CD8-positive, alpha-beta memory T cell (primary cell): ENCODE measurements at regions of chr15 and their contacts with region 1.

Region 1: DNA sequence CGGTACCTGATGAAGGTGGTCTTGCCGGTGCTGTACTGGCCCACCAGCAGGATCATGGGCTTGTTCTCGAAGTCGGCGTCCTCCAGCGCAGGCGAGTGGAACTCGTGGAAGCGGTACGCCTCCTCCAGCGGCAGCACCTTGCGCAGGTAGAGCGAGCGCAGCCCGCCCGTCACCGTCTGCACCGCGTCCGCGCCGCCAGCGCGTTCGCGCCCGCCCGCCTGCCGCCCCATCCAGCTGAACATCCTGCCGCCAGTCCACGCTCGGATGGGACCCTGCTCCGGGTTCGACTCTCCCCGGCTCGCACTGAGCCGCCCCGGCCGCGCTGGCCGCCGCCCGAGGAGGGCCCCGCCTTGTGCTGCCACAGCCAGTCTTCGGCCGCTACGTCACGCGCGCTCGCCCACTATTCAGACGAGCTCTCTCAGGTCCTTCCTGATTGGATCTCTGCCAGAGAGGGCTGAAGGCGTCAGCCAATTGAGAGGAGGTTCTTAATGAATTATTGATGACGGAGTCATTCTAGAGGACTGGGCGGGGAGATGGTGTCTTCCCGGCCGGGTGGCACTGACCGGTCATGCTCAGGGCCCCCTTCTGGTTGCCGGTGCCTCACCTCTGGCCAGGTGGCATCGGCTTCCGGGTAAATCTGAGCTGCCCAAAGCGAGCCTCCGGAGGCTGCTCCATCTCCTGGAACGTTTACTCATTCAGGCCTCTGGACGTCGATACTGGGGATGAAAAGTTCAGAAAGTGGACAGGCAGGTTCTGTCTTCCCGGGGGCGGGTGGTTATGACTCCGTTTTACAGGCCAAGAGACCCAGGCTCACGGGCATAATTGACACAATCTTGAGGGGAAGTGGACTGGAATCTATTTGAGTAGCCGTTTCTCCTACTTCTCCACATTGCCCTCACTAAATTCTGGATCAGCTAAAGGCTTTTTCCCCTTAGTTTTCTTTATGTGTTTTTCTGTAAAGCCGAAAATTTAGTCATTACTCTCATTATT is at the start of gene EHD4:
- DNase-seq: peak; percentile 88 to 98 (median 94)
- H3K4me3 ChIP-seq: peak within 1 kb of the TSS; percentile 90
- H3K4me3 Mint-ChIP-seq: peak within 1 kb of the TSS; percentile 94 to 97 (median 95)
- H3K27ac ChIP-seq: peak within 1 kb of the TSS; percentile 91
- H3K27ac Mint-ChIP-seq: peak within 1 kb of the TSS; percentile 82 to 99 (median 97)
- H3K4me1 ChIP-seq: peaks cover 31% of the 10 kb centered on the region
- H3K4me1 Mint-ChIP-seq: peaks cover 42 to 50% (median 45%) of the 10 kb centered on the region in 3 donors
- H3K27me3 ChIP-seq: no peaks in the 10 kb centered on the region
- H3K27me3 Mint-ChIP-seq: peaks cover 10 to 24% of the 10 kb centered on the region in 2 donors
- total RNA-seq, gene EHD4: 24.2 to 26.4 TPM

Region 2: GRCh38 chr15:41914411-41914810 is 58.1 kb before region 1 on chr15:
- CTCF ChIA-PET with region 1: no interaction called
- POLR2A ChIA-PET with region 1: no interaction called
- DNase-seq: no peak
- H3K4me3 ChIP-seq: no peak overlapping the region
- H3K4me3 Mint-ChIP-seq: no peak overlapping the region
- H3K27ac ChIP-seq: no peak overlapping the region
- H3K27ac Mint-ChIP-seq: peak overlapping the region in 1 of 8 donors; percentile 27
- H3K4me1 ChIP-seq: no peaks in the 10 kb centered on the region
- H3K4me1 Mint-ChIP-seq: no peaks in the 10 kb centered on the region
- H3K27me3 ChIP-seq: no peaks in the 10 kb centered on the region
- H3K27me3 Mint-ChIP-seq: peaks cover 0 to 2% of the 10 kb centered on the region in 2 donors

Region 3: GRCh38 chr15:41936649-41937567 is 35.6 kb before region 1 on chr15:
- CTCF ChIA-PET with region 1: interaction called, 54 read pairs
- POLR2A ChIA-PET with region 1: interaction called, 45 read pairs
- DNase-seq: peak; percentile 74 to 90 (median 78)
- H3K4me3 ChIP-seq: peak overlapping the region; percentile 12
- H3K4me3 Mint-ChIP-seq: peak overlapping the region; percentile 31 to 91 (median 77)
- H3K27ac ChIP-seq: peak overlapping the region; percentile 88
- H3K27ac Mint-ChIP-seq: peak overlapping the region; percentile 94 to 100 (median 100)
- H3K4me1 ChIP-seq: peaks cover 61% of the 10 kb centered on the region
- H3K4me1 Mint-ChIP-seq: peaks cover 57 to 66% (median 66%) of the 10 kb centered on the region in 3 donors
- H3K27me3 ChIP-seq: no peaks in the 10 kb centered on the region
- H3K27me3 Mint-ChIP-seq: no peaks in the 10 kb centered on the region